Naive thymus-derived CD4-positive, alpha-beta T cell (primary cell): ENCODE measurements at regions of chr4 and their contacts with region 1.

Region 1: GRCh38 chr4:152100379-152101201 is 339.8 kb upstream of the GATB start:
- DNase-seq: peak; percentile 40 to 96 (median 95)
- ATAC-seq: peak; percentile 90
- H3K4me3 ChIP-seq: peak overlapping the region; percentile 58
- H3K4me3 Mint-ChIP-seq: peak overlapping the region; percentile 72 to 98 (median 87)
- H3K27ac ChIP-seq: peak overlapping the region; percentile 89
- H3K27ac Mint-ChIP-seq: peak overlapping the region; percentile 95 to 99 (median 98)
- H3K4me1 ChIP-seq: peaks cover 93 to 94% of the 10 kb centered on the region in 2 donors
- H3K4me1 Mint-ChIP-seq: peaks cover 62 to 96% (median 92%) of the 10 kb centered on the region in 7 donors
- H3K27me3 ChIP-seq: no peaks in the 10 kb centered on the region
- H3K27me3 Mint-ChIP-seq: no peaks in the 10 kb centered on the region

Region 2: GRCh38 chr4:151408630-151409469 is 691.7 kb before region 1 on chr4 and contains the start of gene FHIP1A:
- CTCF ChIA-PET with region 1: no interaction called
- POLR2A ChIA-PET with region 1: interaction called, 3 read pairs
- intact Hi-C with region 1: loop called in 1 of 2 experiments (anchors 1 kb)
- DNase-seq: peak; percentile 67 to 89 (median 87)
- ATAC-seq: peak; percentile 96
- H3K4me3 ChIP-seq: peak within 1 kb of the TSS; percentile 63
- H3K4me3 Mint-ChIP-seq: peak within 1 kb of the TSS; percentile 86 to 97 (median 94)
- H3K27ac ChIP-seq: peak within 1 kb of the TSS; percentile 53
- H3K27ac Mint-ChIP-seq: peak within 1 kb of the TSS; percentile 21 to 92 (median 85)
- H3K4me1 ChIP-seq: peaks cover 0 to 6% of the 10 kb centered on the region in 2 donors
- H3K4me1 Mint-ChIP-seq: peaks cover 15 to 26% (median 23%) of the 10 kb centered on the region in 7 donors
- H3K27me3 ChIP-seq: no peaks in the 10 kb centered on the region
- H3K27me3 Mint-ChIP-seq: peaks cover 0 to 56% (median 8%) of the 10 kb centered on the region in 5 donors
- total RNA-seq, gene FHIP1A: 0.05 to 2.7 (median 1.9) TPM

Region 3: DNA sequence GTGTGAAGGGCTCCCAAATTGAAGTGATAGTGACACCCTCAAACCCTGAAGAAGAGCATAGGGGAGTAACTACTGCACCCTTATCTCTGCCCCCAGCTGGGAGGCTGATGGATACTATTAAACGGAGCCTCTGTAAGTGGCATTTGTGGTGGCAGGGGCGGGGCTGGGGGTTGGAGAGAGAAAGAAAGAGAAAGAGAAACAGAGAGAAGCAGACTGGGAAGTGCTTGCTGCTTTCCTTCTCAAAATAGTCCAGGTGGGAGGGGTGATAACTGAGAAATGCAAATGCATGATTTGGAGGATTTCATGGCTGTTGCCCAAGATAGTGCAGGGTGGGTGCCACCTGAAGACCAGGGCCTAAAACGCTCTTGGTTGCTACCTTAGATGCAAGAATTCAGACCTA is 86.3 kb before region 1 on chr4:
- CTCF ChIA-PET with region 1: no interaction called
- POLR2A ChIA-PET with region 1: no interaction called
- intact Hi-C with region 1: loop called (anchors 1 kb)
- DNase-seq: peak in 4 of 9 donors; percentile 18 to 45 (median 29)
- ATAC-seq: peak; percentile 33
- H3K4me3 ChIP-seq: no peak overlapping the region
- H3K4me3 Mint-ChIP-seq: peak overlapping the region; percentile 14 to 73 (median 59)
- H3K27ac ChIP-seq: no peak overlapping the region
- H3K27ac Mint-ChIP-seq: peak overlapping the region; percentile 50 to 88 (median 80)
- H3K4me1 ChIP-seq: peaks cover 36 to 40% of the 10 kb centered on the region in 2 donors
- H3K4me1 Mint-ChIP-seq: peaks cover 41 to 67% (median 52%) of the 10 kb centered on the region in 7 donors
- H3K27me3 ChIP-seq: no peaks in the 10 kb centered on the region
- H3K27me3 Mint-ChIP-seq: peaks cover 0 to 4% (median 0%) of the 10 kb centered on the region in 5 donors

Region 4: GRCh38 chr4:152079543-152080293 is 20.9 kb before region 1 on chr4:
- CTCF ChIA-PET with region 1: interaction called, 4 read pairs
- POLR2A ChIA-PET with region 1: interaction called, 22 read pairs
- intact Hi-C with region 1: loop called (anchors 1 kb)
- DNase-seq: peak in 7 of 9 donors; percentile 35 to 74 (median 66)
- ATAC-seq: peak; percentile 86
- H3K4me3 ChIP-seq: peak overlapping the region; percentile 2
- H3K4me3 Mint-ChIP-seq: peak overlapping the region; percentile 56 to 85 (median 72)
- H3K27ac ChIP-seq: peak overlapping the region; percentile 58
- H3K27ac Mint-ChIP-seq: peak overlapping the region; percentile 89 to 97 (median 94)
- H3K4me1 ChIP-seq: peaks cover 23 to 37% of the 10 kb centered on the region in 2 donors
- H3K4me1 Mint-ChIP-seq: peaks cover 40 to 98% (median 91%) of the 10 kb centered on the region in 7 donors
- H3K27me3 ChIP-seq: no peaks in the 10 kb centered on the region
- H3K27me3 Mint-ChIP-seq: no peaks in the 10 kb centered on the region

Region 5: GRCh38 chr4:152138451-152138850 is 37.9 kb after region 1 on chr4:
- CTCF ChIA-PET with region 1: no interaction called
- POLR2A ChIA-PET with region 1: no interaction called
- intact Hi-C with region 1: loop called in 1 of 2 experiments (anchors 1 kb)
- DNase-seq: peak in 6 of 9 donors; percentile 18 to 52 (median 42)
- ATAC-seq: peak; percentile 61
- H3K4me3 ChIP-seq: no peak overlapping the region
- H3K4me3 Mint-ChIP-seq: peak overlapping the region in 2 of 10 donors; percentile 31 to 59
- H3K27ac ChIP-seq: no peak overlapping the region
- H3K27ac Mint-ChIP-seq: peak overlapping the region in 3 of 9 donors; percentile 8 to 56 (median 9)
- H3K4me1 ChIP-seq: peaks cover 9 to 11% of the 10 kb centered on the region in 2 donors
- H3K4me1 Mint-ChIP-seq: peaks cover 6 to 38% (median 18%) of the 10 kb centered on the region in 7 donors
- H3K27me3 ChIP-seq: no peaks in the 10 kb centered on the region
- H3K27me3 Mint-ChIP-seq: no peaks in the 10 kb centered on the region

Region 6: GRCh38 chr4:152255437-152256011 is 154.9 kb after region 1 on chr4:
- CTCF ChIA-PET with region 1: interaction called, 4 read pairs
- POLR2A ChIA-PET with region 1: interaction called, 14 read pairs
- intact Hi-C with region 1: no loop called
- DNase-seq: peak in 8 of 9 donors; percentile 44 to 64 (median 58)
- ATAC-seq: peak; percentile 89
- H3K4me3 ChIP-seq: no peak overlapping the region
- H3K4me3 Mint-ChIP-seq: no peak overlapping the region
- H3K27ac ChIP-seq: peak overlapping the region; percentile 36
- H3K27ac Mint-ChIP-seq: no peak overlapping the region
- H3K4me1 ChIP-seq: peaks cover 37 to 45% of the 10 kb centered on the region in 2 donors
- H3K4me1 Mint-ChIP-seq: peaks cover 0 to 17% (median 11%) of the 10 kb centered on the region in 7 donors
- H3K27me3 ChIP-seq: no peaks in the 10 kb centered on the region
- H3K27me3 Mint-ChIP-seq: peaks cover 0 to 2% (median 0%) of the 10 kb centered on the region in 5 donors